Pancreas (tissue), 10 donors: ENCODE measurements at regions of chr12 and their contacts with region 1.

Region 1: DNA sequence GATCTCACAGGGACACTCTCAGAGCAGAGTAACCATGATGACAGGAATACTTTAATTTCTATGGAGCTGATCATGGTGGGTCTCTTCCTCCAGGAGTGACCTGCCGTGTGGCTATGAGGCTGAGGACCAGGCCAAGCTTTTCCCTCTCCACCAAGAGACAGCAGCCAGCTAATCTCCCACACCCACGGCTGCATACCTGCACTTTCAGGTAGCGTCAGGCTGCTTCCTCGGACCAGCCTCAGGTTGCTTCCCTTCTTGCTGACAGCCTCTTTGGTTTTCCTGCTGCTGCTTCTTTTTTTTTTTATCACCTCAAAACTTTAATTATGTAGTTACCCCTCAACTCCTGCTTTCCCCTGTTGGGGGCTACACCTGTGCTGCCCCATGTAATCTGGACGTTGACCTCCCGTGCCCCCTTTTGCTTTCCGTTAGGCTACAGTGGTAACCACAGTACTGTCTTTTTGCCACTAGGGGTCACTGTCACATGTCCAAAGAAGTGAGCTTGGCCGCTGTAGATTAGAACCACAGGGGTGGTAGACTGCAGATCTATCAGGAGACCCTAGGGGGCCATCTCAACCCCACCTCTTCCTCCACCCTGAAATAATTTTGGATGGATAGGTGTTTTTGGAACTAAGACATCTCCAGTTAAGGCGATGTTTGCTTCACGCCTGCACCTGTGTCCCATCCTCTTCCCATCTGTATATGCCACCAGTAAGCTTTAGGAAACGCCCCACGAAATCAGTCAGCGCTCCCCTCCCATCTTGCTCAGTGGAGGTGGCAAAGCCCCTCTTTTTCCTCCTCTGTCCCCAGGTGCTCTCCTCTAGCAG is 7.8 kb upstream of the PIP4K2C start:
- DNase-seq: peak in 4 of 6 donors; percentile 46 to 72 (median 58)
- ATAC-seq: peak; percentile 95 to 100 (median 98)
- H3K4me3 ChIP-seq: no peak overlapping the region
- H3K27ac ChIP-seq: no peak overlapping the region
- H3K4me1 ChIP-seq: no peaks in the 10 kb centered on the region
- H3K27me3 ChIP-seq: no peaks in the 10 kb centered on the region
- CTCF ChIP-seq: peak; percentile 91 to 97 (median 94)

Region 2: DNA sequence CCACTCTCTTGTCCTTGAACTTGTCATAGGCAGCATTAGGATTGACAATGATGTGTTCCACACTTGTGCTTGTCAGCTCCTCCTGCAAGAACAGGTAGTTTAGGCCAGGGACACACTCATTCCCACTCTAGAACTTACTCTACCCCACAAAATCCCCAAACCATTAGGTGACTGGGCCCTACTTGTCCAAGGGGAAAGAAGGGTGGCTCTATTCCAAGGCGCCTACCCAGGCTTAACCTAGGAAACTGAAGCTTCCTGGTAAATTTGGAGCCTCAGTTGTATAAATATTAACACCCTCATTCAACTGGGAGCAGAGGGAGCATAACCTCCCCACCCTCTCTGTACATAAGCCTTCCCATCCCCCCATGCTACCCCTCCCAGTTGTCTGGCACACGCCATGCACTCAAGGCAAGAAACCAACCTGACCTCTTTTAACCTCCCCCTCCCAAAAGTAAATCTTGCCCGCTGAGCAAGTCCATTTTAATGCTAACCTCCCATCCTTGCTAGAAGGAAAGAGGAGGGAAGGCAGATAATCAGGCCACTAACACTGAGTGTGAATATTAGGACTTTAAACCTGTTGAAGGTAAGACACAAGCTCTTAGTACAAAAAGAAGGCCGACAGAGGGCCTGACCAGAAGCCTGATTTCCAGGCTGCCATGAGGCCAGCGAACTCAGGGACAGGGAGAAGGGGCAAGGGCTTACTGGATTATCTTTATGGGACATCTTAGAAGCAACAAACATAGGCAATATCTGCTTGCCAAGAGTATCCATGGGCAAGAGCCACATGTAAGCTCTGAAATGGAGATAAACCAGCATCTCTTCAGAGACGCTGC is 47.2 kb before region 1 on chr12:
- intact Hi-C with region 1: no loop called
- DNase-seq: no peak
- ATAC-seq: peak in 1 of 4 donors; percentile 16
- H3K4me3 ChIP-seq: no peak overlapping the region
- H3K27ac ChIP-seq: no peak overlapping the region
- H3K4me1 ChIP-seq: no peaks in the 10 kb centered on the region
- H3K27me3 ChIP-seq: no peaks in the 10 kb centered on the region
- CTCF ChIP-seq: no peak

Region 3: GRCh38 chr12:57627501-57628279 is 44.5 kb after region 1 on chr12:
- intact Hi-C with region 1: loop called (anchors 2 to 10 kb)
- DNase-seq: peak in 3 of 6 donors; percentile 22 to 69 (median 42)
- ATAC-seq: peak in 3 of 4 donors; percentile 17 to 57 (median 48)
- H3K4me3 ChIP-seq: peak overlapping the region in 1 of 4 donors; percentile 17
- H3K27ac ChIP-seq: no peak overlapping the region
- H3K4me1 ChIP-seq: peaks cover 0 to 6% (median 5%) of the 10 kb centered on the region in 3 donors
- H3K27me3 ChIP-seq: peaks cover 0 to 29% (median 3%) of the 10 kb centered on the region in 4 donors
- CTCF ChIP-seq: no peak